ENCODE measurements at regions of chr10 and their contacts with region 1.

Region 1: GRCh38 chr10:104291439-104291951 is 22.5 kb downstream of the GSTO2 start:
- DNase-seq: peak; percentile 90
- ATAC-seq: peak; percentile 100
- H3K4me3 Mint-ChIP-seq: no peak overlapping the region
- H3K27ac Mint-ChIP-seq: no peak overlapping the region
- H3K4me1 Mint-ChIP-seq: peaks cover 12% of the 10 kb centered on the region
- H3K27me3 Mint-ChIP-seq: peaks cover 37% of the 10 kb centered on the region

Region 2: DNA sequence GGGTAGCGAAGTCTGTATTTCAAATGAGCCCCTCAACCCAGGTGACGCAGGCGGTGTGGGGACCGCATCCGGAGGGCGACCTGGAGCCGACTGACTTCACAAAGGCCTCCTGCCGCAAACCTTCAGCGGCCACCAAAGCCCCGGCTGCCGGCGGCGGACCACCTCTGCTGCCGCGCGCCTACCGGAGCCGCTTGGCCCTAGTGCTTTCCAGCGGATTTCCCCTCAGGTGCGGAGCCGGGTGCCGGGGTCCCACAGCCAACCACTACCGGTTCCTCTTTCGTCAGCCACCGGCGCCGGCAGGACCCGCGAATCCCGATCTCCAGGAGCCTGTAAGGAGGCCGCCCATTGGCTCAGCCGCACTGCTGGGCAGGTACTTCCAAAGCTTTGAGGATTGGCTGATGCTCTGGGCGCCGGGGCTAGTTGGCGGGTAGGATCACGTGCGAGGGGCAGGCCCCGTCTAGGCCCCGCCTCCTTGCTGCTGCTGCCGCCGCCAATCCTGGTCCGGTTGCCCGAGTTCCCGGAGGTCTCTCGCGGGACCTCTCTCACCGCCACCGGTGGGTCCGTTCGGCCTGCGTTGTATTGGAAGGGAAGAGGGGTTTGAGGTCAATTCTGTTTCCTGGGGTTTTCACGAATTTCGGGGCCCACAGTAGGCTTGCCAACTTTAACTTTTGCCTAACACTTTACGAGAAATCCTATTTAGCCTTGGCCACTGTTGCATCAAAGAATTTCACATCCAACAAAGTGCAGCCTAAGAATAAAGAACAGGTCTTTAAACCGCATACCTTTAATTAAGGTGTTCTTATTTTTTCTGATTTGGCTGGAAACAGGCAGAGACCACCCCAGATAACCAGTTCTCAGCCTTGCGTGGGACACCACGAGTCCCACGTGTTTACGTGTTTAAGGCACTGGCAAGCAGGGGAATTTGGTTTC is 22.5 kb before region 1 on chr10 and contains the start of gene GSTO2:
- CTCF ChIA-PET with region 1: interaction called, 154 read pairs
- DNase-seq: peak; percentile 100
- ATAC-seq: peak; percentile 97
- H3K4me3 Mint-ChIP-seq: peak within 1 kb of the TSS; percentile 91
- H3K27ac Mint-ChIP-seq: peak within 1 kb of the TSS; percentile 94
- H3K4me1 Mint-ChIP-seq: peaks cover 45% of the 10 kb centered on the region
- H3K27me3 Mint-ChIP-seq: peaks cover 4% of the 10 kb centered on the region
- total RNA-seq, gene GSTO2: 0.96 to 1.3 TPM

Region 3: GRCh38 chr10:104308439-104308903 is 17.0 kb after region 1 on chr10:
- CTCF ChIA-PET with region 1: interaction called, 78 read pairs
- DNase-seq: peak; percentile 57
- ATAC-seq: peak; percentile 59
- H3K4me3 Mint-ChIP-seq: no peak overlapping the region
- H3K27ac Mint-ChIP-seq: peak overlapping the region; percentile 69
- H3K4me1 Mint-ChIP-seq: peaks cover 39% of the 10 kb centered on the region
- H3K27me3 Mint-ChIP-seq: no peaks in the 10 kb centered on the region

Region 4: DNA sequence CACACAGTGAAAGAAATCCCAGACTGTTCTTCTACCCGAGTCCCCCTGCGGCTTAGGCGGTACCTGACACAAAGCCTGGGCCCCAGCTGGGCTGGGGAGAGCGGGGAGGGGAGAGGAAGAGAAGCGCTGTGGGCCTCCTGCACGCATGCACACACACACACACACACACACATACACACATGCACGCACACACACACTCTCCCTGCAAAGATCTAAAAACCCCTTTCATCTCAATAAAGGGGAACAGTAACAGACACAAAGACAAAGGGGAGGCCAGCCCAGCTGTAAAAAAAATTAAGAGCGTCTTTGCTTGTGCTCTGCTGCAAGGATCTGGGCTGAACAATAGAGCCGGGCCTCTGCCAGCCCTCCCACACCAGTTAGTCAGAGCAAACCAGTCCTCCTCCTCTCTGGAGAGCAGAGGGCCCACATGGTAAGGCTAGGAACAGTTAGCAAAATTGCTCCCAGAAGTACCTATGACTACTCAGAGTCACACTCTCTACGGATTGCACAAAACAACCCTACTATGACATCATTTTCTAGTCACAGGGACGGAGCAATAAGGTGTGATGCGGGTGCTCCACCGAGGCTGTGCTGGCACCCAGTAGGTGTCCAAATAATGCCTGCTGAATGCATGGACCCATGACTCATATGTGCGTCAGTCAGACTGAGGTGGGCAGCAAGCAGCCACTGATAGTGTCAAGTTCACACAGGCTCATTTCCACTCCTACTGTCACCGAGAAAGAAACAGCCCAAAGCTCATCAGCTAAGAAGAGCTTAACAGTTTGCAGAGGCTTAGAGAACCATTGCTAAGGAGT is 37.6 kb after region 1 on chr10:
- CTCF ChIA-PET with region 1: interaction called, 65 read pairs
- DNase-seq: peak; percentile 88
- ATAC-seq: peak; percentile 86
- H3K4me3 Mint-ChIP-seq: peak overlapping the region; percentile 63
- H3K27ac Mint-ChIP-seq: peak overlapping the region; percentile 95
- H3K4me1 Mint-ChIP-seq: peaks cover 92% of the 10 kb centered on the region
- H3K27me3 Mint-ChIP-seq: no peaks in the 10 kb centered on the region

Measured in activated CD8-positive, alpha-beta memory T cell treated with anti-CD3 and anti-CD28 coated beads, Interleukin-2, amount 10 ng/mL, durations not matched to agents 7 days and 5 days (primary cell).